RWPE1 (cell line): ENCODE measurements at regions of chr6 and their contacts with region 1.

Region 1: DNA sequence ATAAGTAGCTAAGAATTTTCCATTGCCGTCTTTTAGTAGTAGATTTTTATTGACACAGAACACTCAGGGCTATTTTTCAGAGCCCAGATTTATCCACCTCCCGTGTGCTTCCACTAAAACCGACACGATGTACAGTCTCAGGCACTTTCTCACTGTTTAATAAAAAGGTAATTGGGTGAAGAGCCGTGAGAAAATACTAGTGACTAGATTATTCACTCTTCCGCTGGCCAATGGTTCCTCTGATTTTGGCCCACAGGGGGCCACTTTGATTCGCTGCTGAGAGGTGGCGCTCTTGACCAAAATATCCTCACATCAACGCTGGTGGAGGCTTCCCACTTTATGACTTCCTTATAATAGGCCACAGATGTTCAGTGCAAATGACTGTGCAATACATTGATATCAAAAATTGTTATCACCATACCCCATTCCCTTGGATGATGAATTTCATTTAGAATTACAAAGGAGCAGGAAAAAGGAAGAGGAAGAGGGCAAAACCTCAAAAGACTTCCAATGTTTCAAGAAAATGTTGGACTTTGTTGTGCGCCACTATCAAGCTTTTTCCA is 12.3 kb upstream of the HDDC2 start:
- DNase-seq: peak; percentile 58
- H3K27ac ChIP-seq: no peak overlapping the region
- CTCF ChIP-seq: peak; percentile 76

Region 2: GRCh38 chr6:125753218-125753936 is 439.3 kb after region 1 on chr6:
- CTCF ChIA-PET with region 1: interaction called, 20 read pairs
- POLR2A ChIA-PET with region 1: no interaction called
- DNase-seq: no peak
- H3K27ac ChIP-seq: no peak overlapping the region
- CTCF ChIP-seq: peak; percentile 54